CD4-positive, alpha-beta memory T cell (primary cell): ENCODE measurements at regions of chrX and their contacts with region 1.

Region 1: DNA sequence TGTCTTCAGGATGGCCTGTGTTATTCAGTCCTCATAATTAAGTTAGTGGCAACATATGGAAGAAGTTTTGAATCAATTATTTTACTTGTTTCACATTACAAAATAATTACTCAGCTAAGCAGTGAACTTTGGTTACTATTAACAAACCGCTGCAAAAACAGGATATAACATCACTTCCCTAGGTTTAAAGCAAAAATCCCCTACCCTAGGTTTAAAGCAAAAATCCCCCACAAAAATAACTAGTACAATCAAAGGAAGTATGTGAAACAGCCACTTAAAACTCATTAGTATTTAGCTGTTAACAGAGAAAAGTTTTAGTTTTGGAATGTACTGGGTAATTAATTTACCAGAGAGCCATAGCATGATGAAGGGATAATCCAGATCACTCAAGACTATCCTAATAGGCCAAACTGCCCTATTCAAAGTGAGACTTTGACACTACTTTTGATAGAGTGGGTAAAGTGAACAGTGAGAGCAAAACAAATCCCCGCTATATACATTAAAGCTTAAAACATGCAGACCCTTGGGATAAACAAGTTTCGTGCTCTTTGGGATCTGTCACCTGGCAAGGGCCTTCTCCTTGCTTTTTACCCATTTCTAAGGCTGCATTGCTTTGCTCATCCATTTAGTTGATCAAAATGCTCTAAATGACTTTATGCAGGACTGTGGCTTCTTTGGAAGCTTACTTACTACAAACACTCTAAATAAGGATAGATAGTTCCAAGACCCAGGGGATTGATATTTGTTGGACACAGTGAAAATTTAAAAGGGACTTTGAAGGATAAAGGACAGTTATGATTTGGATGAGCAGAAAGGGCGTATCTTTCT is 36.4 kb upstream of the GPR174 start:
- DNase-seq: peak in 4 of 5 donors; percentile 71 to 81 (median 75)
- H3K4me3 ChIP-seq: peak overlapping the region in 1 of 2 donors; percentile 28
- H3K4me3 Mint-ChIP-seq: peak overlapping the region; percentile 54 to 82 (median 74)
- H3K27ac ChIP-seq: peak overlapping the region; percentile 95
- H3K27ac Mint-ChIP-seq: peak overlapping the region; percentile 96 to 99 (median 97)
- H3K4me1 ChIP-seq: peaks cover 68% of the 10 kb centered on the region
- H3K4me1 Mint-ChIP-seq: peaks cover 27 to 70% (median 47%) of the 10 kb centered on the region in 4 donors
- H3K27me3 ChIP-seq: no peaks in the 10 kb centered on the region
- H3K27me3 Mint-ChIP-seq: no peaks in the 10 kb centered on the region

Region 2: GRCh38 chrX:78548012-78548411 is 560.1 kb before region 1 on chrX:
- CTCF ChIA-PET with region 1: no interaction called
- POLR2A ChIA-PET with region 1: no interaction called
- intact Hi-C with region 1: no loop called
- DNase-seq: no peak
- H3K4me3 ChIP-seq: no peak overlapping the region
- H3K4me3 Mint-ChIP-seq: no peak overlapping the region
- H3K27ac ChIP-seq: no peak overlapping the region
- H3K27ac Mint-ChIP-seq: no peak overlapping the region
- H3K4me1 ChIP-seq: no peaks in the 10 kb centered on the region
- H3K4me1 Mint-ChIP-seq: no peaks in the 10 kb centered on the region
- H3K27me3 ChIP-seq: no peaks in the 10 kb centered on the region
- H3K27me3 Mint-ChIP-seq: no peaks in the 10 kb centered on the region

Region 3: DNA sequence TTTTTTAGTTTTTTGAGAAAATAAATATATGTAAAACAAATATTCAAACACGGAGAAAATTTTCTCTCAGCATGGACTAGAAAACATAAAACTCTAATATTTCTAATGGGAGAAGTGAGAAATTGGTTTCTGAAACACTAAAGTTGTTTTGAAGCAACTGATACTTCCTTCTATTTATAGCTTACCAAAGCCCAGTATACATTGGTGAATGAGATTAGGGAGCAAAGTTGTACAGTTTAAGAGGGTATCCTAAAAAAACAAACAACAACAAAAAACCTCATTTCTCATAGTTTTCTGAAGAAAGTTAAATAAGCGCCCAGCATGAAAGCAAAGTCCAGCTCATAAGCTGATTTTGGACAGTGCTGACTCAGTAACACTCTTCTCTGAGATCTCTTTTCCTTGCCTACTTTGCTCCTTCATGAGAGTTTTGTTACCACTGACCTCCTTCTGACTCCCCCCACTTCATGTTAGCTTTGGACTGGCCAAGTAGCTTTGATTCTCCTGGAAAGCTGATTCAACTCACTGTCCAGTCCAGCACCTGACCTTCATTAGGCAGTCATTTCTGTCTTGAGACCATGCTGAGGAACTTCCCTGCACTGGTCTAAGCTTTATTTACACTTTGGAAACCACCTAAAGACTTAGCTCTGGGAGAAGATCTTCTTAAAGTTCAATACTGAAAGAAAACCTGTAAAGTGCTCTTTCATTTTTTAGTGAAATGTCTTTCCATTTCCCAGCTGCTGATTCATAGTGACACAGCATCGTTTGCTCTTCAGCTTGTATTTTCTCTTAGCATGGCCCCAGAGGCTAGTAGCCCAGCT is 184.7 kb before region 1 on chrX:
- CTCF ChIA-PET with region 1: no interaction called
- POLR2A ChIA-PET with region 1: no interaction called
- intact Hi-C with region 1: no loop called
- DNase-seq: no peak
- H3K4me3 ChIP-seq: no peak overlapping the region
- H3K4me3 Mint-ChIP-seq: no peak overlapping the region
- H3K27ac ChIP-seq: no peak overlapping the region
- H3K27ac Mint-ChIP-seq: peak overlapping the region in 1 of 7 donors; percentile 54
- H3K4me1 ChIP-seq: no peaks in the 10 kb centered on the region
- H3K4me1 Mint-ChIP-seq: peaks cover 0 to 4% (median 2%) of the 10 kb centered on the region in 4 donors
- H3K27me3 ChIP-seq: no peaks in the 10 kb centered on the region
- H3K27me3 Mint-ChIP-seq: no peaks in the 10 kb centered on the region

Region 4: GRCh38 chrX:79065696-79066095 is 42.4 kb before region 1 on chrX:
- CTCF ChIA-PET with region 1: no interaction called
- POLR2A ChIA-PET with region 1: no interaction called
- intact Hi-C with region 1: no loop called
- DNase-seq: no peak
- H3K4me3 ChIP-seq: no peak overlapping the region
- H3K4me3 Mint-ChIP-seq: no peak overlapping the region
- H3K27ac ChIP-seq: no peak overlapping the region
- H3K27ac Mint-ChIP-seq: no peak overlapping the region
- H3K4me1 ChIP-seq: no peaks in the 10 kb centered on the region
- H3K4me1 Mint-ChIP-seq: no peaks in the 10 kb centered on the region
- H3K27me3 ChIP-seq: no peaks in the 10 kb centered on the region
- H3K27me3 Mint-ChIP-seq: no peaks in the 10 kb centered on the region

Region 5: DNA sequence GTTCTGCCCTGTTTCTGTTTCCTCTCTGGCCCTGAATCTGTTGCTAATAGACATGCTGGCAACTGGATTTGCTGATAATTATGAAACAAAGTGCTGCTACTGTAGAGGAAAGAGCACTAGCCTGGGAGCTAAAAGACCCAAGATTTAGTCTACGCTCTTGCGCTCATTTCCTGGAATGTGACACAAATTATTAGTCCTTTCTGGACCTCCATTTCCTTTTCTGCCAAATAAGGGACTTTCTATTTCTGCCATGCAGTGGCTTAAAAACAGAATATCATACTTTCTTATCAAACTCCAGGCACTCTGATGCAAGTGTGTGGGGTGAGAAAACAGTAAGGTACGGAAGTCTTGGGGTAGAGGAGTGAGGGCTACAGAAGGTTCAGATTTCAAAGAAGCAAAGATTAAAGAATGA is 12.0 kb before region 1 on chrX:
- CTCF ChIA-PET with region 1: interaction called, 9 read pairs
- POLR2A ChIA-PET with region 1: interaction called, 42 read pairs
- intact Hi-C with region 1: no loop called
- DNase-seq: peak in 3 of 5 donors; percentile 41 to 45 (median 42)
- H3K4me3 ChIP-seq: peak overlapping the region; percentile 17 to 33
- H3K4me3 Mint-ChIP-seq: peak overlapping the region; percentile 31 to 84 (median 56)
- H3K27ac ChIP-seq: peak overlapping the region; percentile 68
- H3K27ac Mint-ChIP-seq: peak overlapping the region; percentile 83 to 96 (median 91)
- H3K4me1 ChIP-seq: peaks cover 69% of the 10 kb centered on the region
- H3K4me1 Mint-ChIP-seq: peaks cover 31 to 70% (median 52%) of the 10 kb centered on the region in 4 donors
- H3K27me3 ChIP-seq: no peaks in the 10 kb centered on the region
- H3K27me3 Mint-ChIP-seq: no peaks in the 10 kb centered on the region

Region 6: DNA sequence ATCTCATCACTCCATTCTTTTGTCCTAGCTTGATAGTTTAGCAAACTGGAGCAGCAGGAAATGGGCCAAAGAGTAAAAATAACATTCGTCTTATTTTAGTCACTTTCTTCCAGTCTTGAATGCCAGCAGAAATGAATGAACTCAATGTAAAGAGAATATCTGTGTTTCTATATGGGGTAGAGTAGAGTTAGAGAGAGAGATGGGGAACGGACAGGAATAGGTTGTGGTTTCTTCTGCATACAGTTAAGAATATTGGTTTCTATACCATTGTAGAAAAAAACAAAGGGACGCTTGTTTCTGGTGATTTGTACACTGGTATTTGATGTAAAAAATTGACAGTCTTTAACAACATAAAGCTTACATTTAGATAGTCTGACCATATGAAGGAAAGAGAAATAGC is 45.2 kb after region 1 on chrX:
- CTCF ChIA-PET with region 1: interaction called, 7 read pairs
- POLR2A ChIA-PET with region 1: interaction called, 40 read pairs
- intact Hi-C with region 1: no loop called
- DNase-seq: no peak
- H3K4me3 ChIP-seq: peak overlapping the region; percentile 34 to 42
- H3K4me3 Mint-ChIP-seq: peak overlapping the region; percentile 57 to 93 (median 84)
- H3K27ac ChIP-seq: peak overlapping the region; percentile 71
- H3K27ac Mint-ChIP-seq: peak overlapping the region; percentile 83 to 97 (median 93)
- H3K4me1 ChIP-seq: peaks cover 94% of the 10 kb centered on the region
- H3K4me1 Mint-ChIP-seq: peaks cover 34 to 81% (median 42%) of the 10 kb centered on the region in 4 donors
- H3K27me3 ChIP-seq: no peaks in the 10 kb centered on the region
- H3K27me3 Mint-ChIP-seq: no peaks in the 10 kb centered on the region

Region 7: DNA sequence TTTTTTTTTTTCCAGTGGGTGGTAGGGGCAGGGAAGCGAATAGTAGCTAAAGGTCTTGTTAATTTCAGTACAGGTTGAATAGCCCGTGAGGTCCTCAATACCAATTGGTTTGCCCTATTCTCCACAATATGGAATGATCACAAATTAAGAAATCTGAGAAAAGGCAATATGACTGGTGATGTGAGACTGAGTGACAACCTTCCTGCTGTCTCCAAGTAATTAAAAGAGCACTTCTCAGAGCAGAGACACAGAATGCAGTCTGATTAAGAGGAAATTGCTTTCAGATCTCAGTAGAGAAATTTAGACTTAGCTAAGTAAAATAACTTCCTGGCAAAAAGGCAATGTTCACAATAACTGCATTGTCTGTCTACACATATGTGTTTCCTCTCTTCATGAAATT is 59.4 kb after region 1 on chrX:
- CTCF ChIA-PET with region 1: no interaction called
- POLR2A ChIA-PET with region 1: interaction called, 41 read pairs
- intact Hi-C with region 1: no loop called
- DNase-seq: no peak
- H3K4me3 ChIP-seq: peak overlapping the region in 1 of 2 donors; percentile 23
- H3K4me3 Mint-ChIP-seq: peak overlapping the region; percentile 19 to 81 (median 60)
- H3K27ac ChIP-seq: peak overlapping the region; percentile 66
- H3K27ac Mint-ChIP-seq: peak overlapping the region; percentile 77 to 97 (median 90)
- H3K4me1 ChIP-seq: peaks cover 98% of the 10 kb centered on the region
- H3K4me1 Mint-ChIP-seq: peaks cover 47 to 95% (median 67%) of the 10 kb centered on the region in 4 donors
- H3K27me3 ChIP-seq: no peaks in the 10 kb centered on the region
- H3K27me3 Mint-ChIP-seq: no peaks in the 10 kb centered on the region

Region 8: GRCh38 chrX:79515529-79515928 is 407.4 kb after region 1 on chrX:
- CTCF ChIA-PET with region 1: no interaction called
- POLR2A ChIA-PET with region 1: no interaction called
- intact Hi-C with region 1: no loop called
- DNase-seq: no peak
- H3K4me3 ChIP-seq: no peak overlapping the region
- H3K4me3 Mint-ChIP-seq: no peak overlapping the region
- H3K27ac ChIP-seq: no peak overlapping the region
- H3K27ac Mint-ChIP-seq: no peak overlapping the region
- H3K4me1 ChIP-seq: no peaks in the 10 kb centered on the region
- H3K4me1 Mint-ChIP-seq: no peaks in the 10 kb centered on the region
- H3K27me3 ChIP-seq: no peaks in the 10 kb centered on the region
- H3K27me3 Mint-ChIP-seq: no peaks in the 10 kb centered on the region